Activated T-helper 2 cell treated with anti-CD3 and anti-CD28 coated beads, Interferon-gamma antibody, Interleukin-2, Interleukin-4, amounts not matched to agents 10 μg/mL and 5 μg/mL and 100 μg/mL, durations not matched to agents 14 hours and 24 hours and 36 hours (primary cell): ENCODE measurements at regions of chr5 and their contacts with region 1.

Region 1: DNA sequence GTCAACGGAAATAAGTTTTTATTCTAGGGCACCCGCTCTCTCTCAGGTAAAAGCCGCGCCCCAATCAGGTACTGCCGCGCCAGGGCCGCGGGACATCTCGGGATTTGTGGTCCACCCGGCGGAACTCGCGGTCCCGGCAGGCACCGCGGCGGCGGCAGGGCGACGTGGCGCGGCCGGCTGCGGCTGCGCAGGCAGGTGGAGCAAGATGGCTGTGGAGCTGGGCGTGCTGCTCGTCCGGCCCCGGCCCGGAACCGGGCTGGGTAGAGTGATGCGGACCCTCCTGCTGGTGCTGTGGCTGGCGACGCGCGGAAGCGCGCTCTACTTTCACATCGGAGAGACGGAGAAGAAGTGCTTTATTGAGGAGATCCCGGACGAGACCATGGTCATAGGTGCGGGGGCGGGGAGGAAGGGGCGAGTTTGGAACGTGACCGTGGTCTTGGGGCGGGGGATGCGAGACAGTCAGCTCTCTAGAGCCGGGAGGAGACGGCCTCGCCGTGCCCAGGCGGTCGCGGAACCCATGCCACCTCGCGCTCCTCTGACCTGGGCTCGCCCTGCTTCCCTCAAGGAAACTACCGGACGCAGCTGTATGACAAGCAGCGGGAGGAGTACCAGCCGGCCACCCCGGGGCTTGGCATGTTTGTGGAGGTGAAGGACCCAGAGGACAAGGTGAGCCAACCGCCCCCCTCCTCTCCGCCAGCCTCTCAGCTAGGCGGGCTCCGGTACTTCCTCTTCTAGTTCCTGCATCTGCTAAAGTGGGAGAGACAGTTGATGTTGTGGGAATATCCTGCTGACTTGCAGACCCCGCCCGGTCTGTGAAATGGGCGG is at the start of gene TMED9:
- DNase-seq: peak; percentile 89
- H3K4me3 Mint-ChIP-seq: peak within 1 kb of the TSS; percentile 98
- H3K27ac Mint-ChIP-seq: peak within 1 kb of the TSS; percentile 98
- H3K4me1 Mint-ChIP-seq: peaks cover 18% of the 10 kb centered on the region
- H3K27me3 Mint-ChIP-seq: peaks cover 21% of the 10 kb centered on the region
- total RNA-seq, gene TMED9: 174 and 175 TPM in 2 replicates

Region 2: GRCh38 chr5:177554474-177555111 is 37.6 kb before region 1 on chr5 and contains the start of gene FAM193B:
- intact Hi-C with region 1: loop called (anchors 1 kb)
- DNase-seq: peak; percentile 94
- H3K4me3 Mint-ChIP-seq: peak within 1 kb of the TSS; percentile 82
- H3K27ac Mint-ChIP-seq: peak within 1 kb of the TSS; percentile 58
- H3K4me1 Mint-ChIP-seq: peaks cover 32% of the 10 kb centered on the region
- H3K27me3 Mint-ChIP-seq: no peaks in the 10 kb centered on the region
- total RNA-seq, gene FAM193B: 75.8 and 81.0 TPM in 2 replicates